Heart right ventricle (tissue), 16 donors: ENCODE measurements at regions of chr12 and their contacts with region 1.

Region 1: DNA sequence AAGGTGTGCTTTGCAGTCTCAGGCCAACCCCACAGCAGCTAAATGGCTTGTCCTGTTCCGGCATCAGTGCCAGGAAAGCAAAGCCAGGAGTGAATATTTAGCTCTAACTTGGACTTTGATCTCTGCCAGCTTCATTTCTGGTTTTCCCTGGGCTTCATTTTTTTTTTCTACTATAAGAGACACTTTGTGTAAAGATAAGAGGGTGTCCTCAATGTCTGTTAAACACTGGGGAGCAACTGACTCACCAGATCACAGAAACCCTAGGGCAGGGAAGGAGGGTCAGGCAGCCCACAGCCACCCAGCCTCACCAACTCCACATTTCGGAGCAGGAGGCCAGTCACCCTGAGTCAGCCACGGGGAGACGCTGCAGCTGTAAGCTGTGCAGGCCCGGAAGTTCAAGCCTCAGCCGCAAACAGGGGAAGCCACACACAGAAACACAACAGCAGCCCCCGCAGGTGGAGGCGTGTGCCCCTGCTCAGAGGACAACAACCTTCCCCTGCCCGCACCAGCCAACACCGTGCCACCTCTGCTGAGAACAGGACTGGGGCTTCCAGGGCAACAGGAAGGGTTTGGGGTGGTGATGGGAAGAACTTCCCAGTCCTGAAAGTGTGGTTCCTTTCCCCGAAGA is 6.3 kb downstream of the TNFRSF1A start:
- DNase-seq: peak; percentile 68 to 77
- ATAC-seq: peak; percentile 39 to 63 (median 58)
- H3K4me3 ChIP-seq: peak overlapping the region in 9 of 10 donors; percentile 30 to 99 (median 95)
- H3K27ac ChIP-seq: peak overlapping the region; percentile 88 to 100 (median 97)
- H3K4me1 ChIP-seq: peaks cover 42 to 96% (median 78%) of the 10 kb centered on the region in 9 donors
- H3K27me3 ChIP-seq: no peaks in the 10 kb centered on the region
- CTCF ChIP-seq: peak; percentile 14 to 71 (median 50)

Region 2: GRCh38 chr12:6367065-6367968 is 31.8 kb after region 1 on chr12:
- intact Hi-C with region 1: loop called in 2 of 10 experiments (anchors 2 to 5 kb)
- DNase-seq: no peak
- ATAC-seq: no peak
- H3K4me3 ChIP-seq: no peak overlapping the region
- H3K27ac ChIP-seq: peak overlapping the region in 5 of 10 donors; percentile 2 to 77 (median 23)
- H3K4me1 ChIP-seq: peaks cover 0 to 56% (median 16%) of the 10 kb centered on the region in 9 donors
- H3K27me3 ChIP-seq: no peaks in the 10 kb centered on the region
- CTCF ChIP-seq: peak in 7 of 9 donors; percentile 9 to 56 (median 44)

Region 3: GRCh38 chr12:6383572-6384498 is 48.3 kb after region 1 on chr12 and contains the start of gene LTBR:
- intact Hi-C with region 1: loop called in 8 of 10 experiments (anchors 2 to 10 kb)
- DNase-seq: peak; percentile 96 to 98
- ATAC-seq: peak; percentile 96 to 98 (median 97)
- H3K4me3 ChIP-seq: peak within 1 kb of the TSS; percentile 53 to 94 (median 82)
- H3K27ac ChIP-seq: peak within 1 kb of the TSS; percentile 63 to 98 (median 95)
- H3K4me1 ChIP-seq: peaks cover 5 to 65% (median 28%) of the 10 kb centered on the region in 9 donors
- H3K27me3 ChIP-seq: no peaks in the 10 kb centered on the region
- CTCF ChIP-seq: peak in 5 of 9 donors; percentile 15 to 48 (median 33)
- total RNA-seq, gene LTBR: 14.1 to 49.1 (median 20.8) TPM

Region 4: DNA sequence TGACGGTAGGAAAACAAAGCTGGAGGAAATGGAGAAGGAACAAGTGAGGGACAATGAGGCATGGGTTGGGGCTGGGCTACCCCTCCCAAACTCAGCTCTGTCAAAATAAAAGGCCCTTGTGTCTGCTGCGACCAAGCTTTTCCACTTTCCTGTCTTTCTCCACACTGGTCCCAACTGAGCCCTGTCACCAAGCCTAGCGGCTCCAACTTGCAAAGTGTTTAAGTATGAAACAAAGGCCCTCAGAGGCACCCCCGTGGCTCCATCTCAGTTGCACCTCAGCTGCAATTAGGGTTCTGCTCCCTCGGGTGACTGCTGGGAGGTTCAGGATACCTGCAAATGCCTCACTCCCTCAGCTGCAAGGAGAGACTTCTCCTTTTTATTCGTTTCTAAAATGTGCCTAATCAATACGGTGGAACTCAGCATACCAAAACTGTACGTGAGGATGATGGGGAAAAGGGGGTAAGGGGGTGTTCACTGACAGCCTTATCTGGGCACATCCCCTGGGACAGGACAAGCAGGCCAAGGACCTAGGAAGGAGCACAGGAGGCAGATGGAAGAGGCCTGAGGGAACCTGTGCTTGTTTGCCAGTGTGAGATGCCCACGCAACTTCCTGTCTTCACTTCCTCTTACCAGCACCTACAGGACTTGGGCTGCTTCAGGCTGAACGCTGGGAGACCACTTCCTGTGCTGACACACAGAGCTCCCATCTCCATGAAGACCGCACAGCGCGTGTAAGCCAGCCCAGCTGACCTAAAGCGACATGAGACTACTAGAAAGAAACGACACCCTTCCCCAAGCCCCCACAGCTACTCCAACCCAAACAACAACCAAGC is 126.1 kb after region 1 on chr12:
- intact Hi-C with region 1: loop called in 2 of 10 experiments (anchors 5 kb)
- DNase-seq: no peak
- ATAC-seq: peak; percentile 25 to 61 (median 35)
- H3K4me3 ChIP-seq: peak overlapping the region in 1 of 10 donors; percentile 22
- H3K27ac ChIP-seq: peak overlapping the region in 9 of 10 donors; percentile 39 to 89 (median 56)
- H3K4me1 ChIP-seq: peaks cover 0 to 71% (median 12%) of the 10 kb centered on the region in 9 donors
- H3K27me3 ChIP-seq: no peaks in the 10 kb centered on the region
- CTCF ChIP-seq: no peak

Region 5: GRCh38 chr12:6470375-6471163 is 135.0 kb after region 1 on chr12 and contains the start of gene VAMP1:
- intact Hi-C with region 1: loop called in 1 of 10 experiments (anchors 5 kb)
- DNase-seq: peak; percentile 97 to 98
- ATAC-seq: peak; percentile 97 to 99 (median 98)
- H3K4me3 ChIP-seq: peak within 1 kb of the TSS; percentile 60 to 78 (median 72)
- H3K27ac ChIP-seq: peak within 1 kb of the TSS; percentile 16 to 93 (median 86)
- H3K4me1 ChIP-seq: peaks cover 4 to 45% (median 21%) of the 10 kb centered on the region in 9 donors
- H3K27me3 ChIP-seq: no peaks in the 10 kb centered on the region
- CTCF ChIP-seq: peak in 2 of 9 donors; percentile 9 to 16
- total RNA-seq, gene VAMP1: 1.4 to 6.1 (median 3.0) TPM